A549 (cell line): ENCODE measurements at regions of chr3 and their contacts with region 1.

Region 1: GRCh38 chr3:42020681-42021307 is 58.9 kb upstream of the ULK4 start:
- DNase-seq: peak in 1 of 2 experiments; percentile 37
- ATAC-seq: peak; percentile 51 to 68; a peak in 3 of 6 replicates
- H3K4me3 ChIP-seq: no peak overlapping the region
- H3K27ac ChIP-seq: peak overlapping the region; percentile 34 to 68; a peak in 4 of 6 replicates
- H3K4me1 ChIP-seq: peaks cover 55% of the 10 kb centered on the region
- CTCF ChIP-seq: no peak
- EP300 ChIP-seq: no peak
- POLR2A ChIP-seq: no peak
- RAD21 ChIP-seq: no peak

Region 2: DNA sequence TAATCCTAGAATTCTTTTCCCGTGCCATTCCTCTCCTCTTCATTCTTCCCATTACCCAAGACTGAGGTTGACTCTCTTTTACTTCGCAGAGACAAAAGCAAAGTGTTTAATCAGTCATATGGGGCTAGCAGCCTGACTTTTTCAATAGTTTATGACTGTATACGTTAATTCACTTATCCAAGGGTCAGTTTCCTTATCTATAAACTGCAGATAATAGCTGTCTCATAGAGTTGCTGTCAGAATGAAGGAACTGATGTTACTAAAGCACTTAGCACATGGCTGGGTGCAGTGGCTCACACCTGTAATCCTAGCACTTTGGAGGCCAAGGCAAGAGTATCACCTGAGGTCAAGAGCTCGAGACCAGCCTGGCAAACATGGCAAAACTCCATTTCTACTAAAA is 15.4 kb before region 1 on chr3:
- CTCF ChIA-PET with region 1: no interaction called
- POLR2A ChIA-PET with region 1: no interaction called
- DNase-seq: no peak
- ATAC-seq: no peak
- H3K4me3 ChIP-seq: no peak overlapping the region
- H3K27ac ChIP-seq: no peak overlapping the region
- H3K4me1 ChIP-seq: no peaks in the 10 kb centered on the region
- CTCF ChIP-seq: no peak
- EP300 ChIP-seq: no peak
- POLR2A ChIP-seq: no peak
- RAD21 ChIP-seq: no peak

Region 3: GRCh38 chr3:42036483-42036823 is 15.7 kb after region 1 on chr3:
- CTCF ChIA-PET with region 1: interaction called, 12 read pairs
- POLR2A ChIA-PET with region 1: no interaction called
- DNase-seq: peak; percentile 53 to 62
- ATAC-seq: peak; percentile 84 to 85
- H3K4me3 ChIP-seq: no peak overlapping the region
- H3K27ac ChIP-seq: peak overlapping the region; percentile 71 to 81
- H3K4me1 ChIP-seq: peaks cover 55% of the 10 kb centered on the region
- CTCF ChIP-seq: no peak
- EP300 ChIP-seq: no peak
- POLR2A ChIP-seq: no peak
- RAD21 ChIP-seq: no peak